Activated T-helper 2 cell treated with anti-CD3 and anti-CD28 coated beads, Interferon-gamma antibody, Interleukin-2, Interleukin-4, amounts not matched to agents 10 μg/mL and 5 μg/mL and 100 μg/mL, durations not matched to agents 14 hours and 24 hours and 36 hours (primary cell): ENCODE measurements at regions of chr14 and their contacts with region 1.

Region 1: GRCh38 chr14:91060351-91061055 is at the start of gene RPS6KA5:
- DNase-seq: peak; percentile 100
- H3K4me3 Mint-ChIP-seq: peak within 1 kb of the TSS; percentile 81
- H3K27ac Mint-ChIP-seq: peak within 1 kb of the TSS; percentile 43
- H3K4me1 Mint-ChIP-seq: peaks cover 54% of the 10 kb centered on the region
- H3K27me3 Mint-ChIP-seq: no peaks in the 10 kb centered on the region
- total RNA-seq, gene RPS6KA5: 20.5 and 21.4 TPM in 2 replicates

Region 2: GRCh38 chr14:89954070-89955028 is 1106.2 kb before region 1 on chr14 and contains the start of gene EFCAB11:
- intact Hi-C with region 1: loop called (anchors 5 kb)
- DNase-seq: peak; percentile 96
- H3K4me3 Mint-ChIP-seq: peak within 1 kb of the TSS; percentile 87
- H3K27ac Mint-ChIP-seq: peak within 1 kb of the TSS; percentile 81
- H3K4me1 Mint-ChIP-seq: peaks cover 43% of the 10 kb centered on the region
- H3K27me3 Mint-ChIP-seq: no peaks in the 10 kb centered on the region
- total RNA-seq, gene EFCAB11: 7.1 and 9.0 TPM in 2 replicates

Region 3: DNA sequence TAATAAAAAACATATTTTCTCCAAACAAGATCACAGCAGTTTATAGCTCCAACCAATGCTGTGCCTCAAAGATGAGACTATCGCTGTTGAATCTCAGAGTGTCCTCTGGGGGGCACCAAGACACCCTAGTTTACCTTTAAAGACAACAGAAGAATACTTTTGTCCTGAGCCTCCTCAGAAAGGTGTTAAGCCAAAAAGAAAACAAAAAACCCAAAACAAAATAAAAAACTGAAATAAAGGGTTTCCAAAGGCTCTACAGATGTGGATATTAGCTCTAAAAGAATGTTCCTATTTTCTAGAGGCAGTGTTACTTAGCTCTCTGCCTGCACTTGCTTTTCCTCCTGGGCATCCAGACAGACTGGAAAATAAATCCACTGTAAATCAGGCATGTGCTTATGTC is 157.4 kb before region 1 on chr14:
- intact Hi-C with region 1: loop called (anchors 5 kb)
- DNase-seq: peak; percentile 44
- H3K4me3 Mint-ChIP-seq: no peak overlapping the region
- H3K27ac Mint-ChIP-seq: peak overlapping the region; percentile 12
- H3K4me1 Mint-ChIP-seq: peaks cover 31% of the 10 kb centered on the region
- H3K27me3 Mint-ChIP-seq: no peaks in the 10 kb centered on the region

Region 4: DNA sequence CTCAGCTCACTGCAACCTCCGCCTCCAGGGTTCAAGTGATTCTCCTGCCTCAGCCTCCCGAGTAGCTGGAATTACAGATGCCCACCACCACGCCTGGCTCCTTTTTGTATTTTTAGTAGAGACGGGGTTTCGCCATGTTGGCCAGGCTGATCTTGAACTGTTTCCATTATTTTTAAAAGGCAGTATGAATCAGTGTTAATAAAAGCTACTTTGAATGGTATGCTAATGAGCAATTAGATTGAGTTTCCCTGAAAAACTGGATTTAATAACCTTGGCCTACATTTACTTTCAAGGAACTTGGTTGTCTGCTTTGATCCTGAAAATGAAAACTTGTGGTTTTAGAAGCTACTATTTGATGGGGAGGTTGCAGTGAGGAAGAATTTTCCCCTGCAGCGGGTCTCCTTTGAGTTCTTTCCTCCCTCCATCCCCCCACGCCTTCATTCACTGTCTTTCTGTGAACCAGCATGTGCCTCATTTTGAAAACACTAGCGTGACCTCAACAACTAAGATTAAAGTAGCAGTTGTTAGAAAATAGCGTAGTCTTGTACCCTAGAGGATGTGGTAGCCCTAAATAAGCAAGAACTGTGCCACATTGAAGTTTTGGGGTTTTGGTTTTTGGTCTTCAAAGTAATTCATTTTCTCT is 17.7 kb after region 1 on chr14:
- intact Hi-C with region 1: loop called (anchors 1 kb)
- DNase-seq: peak; percentile 61
- H3K4me3 Mint-ChIP-seq: peak overlapping the region; percentile 9
- H3K27ac Mint-ChIP-seq: peak overlapping the region; percentile 78
- H3K4me1 Mint-ChIP-seq: peaks cover 40% of the 10 kb centered on the region
- H3K27me3 Mint-ChIP-seq: no peaks in the 10 kb centered on the region

Region 5: DNA sequence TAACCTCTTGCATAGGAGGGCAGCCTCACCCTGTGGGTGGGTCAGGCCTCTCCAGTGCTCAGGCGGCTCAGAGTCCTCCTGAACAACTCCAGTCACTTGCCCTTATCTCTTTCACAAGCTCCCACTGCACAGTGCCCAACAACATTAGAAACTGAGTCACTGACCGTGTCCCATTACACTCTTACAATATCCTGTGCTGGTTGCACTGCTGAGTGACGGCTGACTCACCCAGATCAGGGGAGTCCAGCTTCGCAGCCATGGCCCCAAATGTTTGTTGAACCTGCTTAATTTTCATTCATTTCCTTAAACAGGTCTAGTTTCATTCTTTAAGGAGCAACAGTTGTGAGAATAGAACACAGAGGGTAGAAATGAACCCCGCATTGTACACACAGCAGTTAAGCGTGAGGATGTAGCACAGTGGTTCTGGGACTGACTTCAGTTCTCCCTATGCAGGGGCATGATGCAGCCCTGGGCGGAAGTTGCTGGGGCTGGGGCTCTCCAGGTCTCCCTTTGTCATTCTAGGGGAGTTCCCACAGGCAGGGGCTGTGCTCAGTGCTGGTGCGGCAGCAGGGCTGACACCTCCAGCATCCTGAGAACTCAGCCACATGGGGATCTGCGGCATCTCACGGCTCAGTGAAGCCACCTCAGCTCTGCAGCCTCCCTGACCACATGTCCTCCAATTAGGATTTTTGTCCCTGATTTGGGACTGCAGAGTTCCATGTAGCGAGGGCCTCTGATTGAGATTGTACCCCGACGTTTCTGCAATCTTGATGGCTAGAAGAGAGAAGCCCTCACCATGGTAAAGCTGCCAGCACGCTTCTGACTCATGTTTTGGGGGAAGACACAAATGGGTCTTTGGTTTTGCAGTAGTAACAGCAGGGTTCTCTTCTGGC is 167.9 kb after region 1 on chr14:
- intact Hi-C with region 1: loop called (anchors 2 kb)
- DNase-seq: peak; percentile 76
- H3K4me3 Mint-ChIP-seq: peak overlapping the region; percentile 75
- H3K27ac Mint-ChIP-seq: peak overlapping the region; percentile 100
- H3K4me1 Mint-ChIP-seq: peaks cover 80% of the 10 kb centered on the region
- H3K27me3 Mint-ChIP-seq: no peaks in the 10 kb centered on the region

Region 6: DNA sequence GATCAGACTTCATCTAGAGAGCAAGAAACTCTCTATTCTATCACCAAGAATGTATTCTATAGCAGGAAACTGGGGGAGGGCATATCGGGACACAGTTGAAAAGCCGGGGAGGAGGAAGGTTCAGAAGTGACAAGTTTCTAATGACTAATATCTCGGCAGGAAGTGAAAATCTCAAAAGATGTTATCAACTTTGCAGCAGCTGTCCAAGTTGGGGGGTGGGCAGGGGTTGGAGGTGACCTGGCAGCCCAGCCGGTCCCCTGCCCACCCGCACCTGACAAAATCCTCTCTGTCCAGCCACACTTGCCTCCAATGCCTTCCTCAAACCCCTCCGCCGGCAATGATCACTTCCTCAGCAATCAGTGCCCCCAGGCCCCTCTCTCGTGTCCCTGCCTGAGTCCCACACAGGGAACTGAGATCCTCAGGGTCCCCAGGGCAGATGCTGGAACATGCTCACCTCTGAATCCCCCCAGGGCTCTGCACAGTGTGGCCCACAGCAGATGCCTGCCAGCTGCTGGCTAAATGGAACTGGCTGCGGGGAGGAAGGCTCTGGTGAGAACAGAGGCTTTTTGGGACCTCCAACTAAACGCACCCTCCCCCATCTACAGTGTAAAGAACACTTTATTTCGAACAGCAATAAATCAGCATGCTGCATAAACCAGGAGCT is 313.2 kb after region 1 on chr14:
- intact Hi-C with region 1: loop called (anchors 5 kb)
- DNase-seq: peak; percentile 55
- H3K4me3 Mint-ChIP-seq: peak overlapping the region; percentile 77
- H3K27ac Mint-ChIP-seq: peak overlapping the region; percentile 95
- H3K4me1 Mint-ChIP-seq: peaks cover 93% of the 10 kb centered on the region
- H3K27me3 Mint-ChIP-seq: no peaks in the 10 kb centered on the region